Caco-2 (cell line): ENCODE measurements at regions of chr19 and their contacts with region 1.

Region 1: DNA sequence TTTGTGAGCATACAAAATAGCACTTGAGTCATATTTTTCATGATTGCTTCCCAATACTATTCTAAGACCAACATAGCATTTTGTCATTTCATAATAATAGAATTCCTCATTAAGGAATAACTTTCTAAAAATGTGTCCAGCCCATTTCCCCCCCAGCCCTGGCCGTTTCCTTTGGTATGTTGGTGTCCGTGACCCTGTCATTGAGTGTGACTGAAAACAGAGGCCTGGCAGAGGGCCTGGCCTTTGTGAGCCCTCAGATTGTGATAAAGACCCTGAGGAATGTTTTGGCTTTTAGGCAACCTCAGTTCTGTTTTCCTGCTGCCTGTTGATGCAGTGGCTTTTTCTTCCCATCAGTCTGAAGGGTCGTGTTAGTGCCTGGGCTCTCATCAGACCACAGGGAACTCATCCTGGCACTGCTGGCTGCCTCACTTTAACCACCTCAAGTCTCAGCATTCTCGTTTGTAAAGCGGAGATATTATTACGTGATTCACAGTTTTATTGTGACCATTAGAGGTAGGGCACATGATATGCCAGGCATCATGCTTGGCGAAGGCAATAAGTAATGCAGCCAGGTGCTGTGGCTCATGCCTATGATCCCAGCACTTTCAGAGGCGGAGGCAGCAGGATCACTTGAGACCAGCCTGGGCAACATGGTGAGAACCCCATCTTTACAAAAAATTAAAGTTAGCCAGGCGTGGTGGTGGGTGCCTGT is 13.8 kb downstream of the SPINT2 start:
- DNase-seq: no peak
- H3K4me3 ChIP-seq: no peak overlapping the region
- H3K4me3 Mint-ChIP-seq: peak overlapping the region; percentile 35
- H3K27ac Mint-ChIP-seq: peak overlapping the region; percentile 72
- H3K4me1 ChIP-seq: peaks cover 45% of the 10 kb centered on the region
- H3K4me1 Mint-ChIP-seq: peaks cover 29% of the 10 kb centered on the region
- H3K27me3 ChIP-seq: no peaks in the 10 kb centered on the region
- H3K27me3 Mint-ChIP-seq: no peaks in the 10 kb centered on the region
- CTCF ChIP-seq: no peak

Region 2: DNA sequence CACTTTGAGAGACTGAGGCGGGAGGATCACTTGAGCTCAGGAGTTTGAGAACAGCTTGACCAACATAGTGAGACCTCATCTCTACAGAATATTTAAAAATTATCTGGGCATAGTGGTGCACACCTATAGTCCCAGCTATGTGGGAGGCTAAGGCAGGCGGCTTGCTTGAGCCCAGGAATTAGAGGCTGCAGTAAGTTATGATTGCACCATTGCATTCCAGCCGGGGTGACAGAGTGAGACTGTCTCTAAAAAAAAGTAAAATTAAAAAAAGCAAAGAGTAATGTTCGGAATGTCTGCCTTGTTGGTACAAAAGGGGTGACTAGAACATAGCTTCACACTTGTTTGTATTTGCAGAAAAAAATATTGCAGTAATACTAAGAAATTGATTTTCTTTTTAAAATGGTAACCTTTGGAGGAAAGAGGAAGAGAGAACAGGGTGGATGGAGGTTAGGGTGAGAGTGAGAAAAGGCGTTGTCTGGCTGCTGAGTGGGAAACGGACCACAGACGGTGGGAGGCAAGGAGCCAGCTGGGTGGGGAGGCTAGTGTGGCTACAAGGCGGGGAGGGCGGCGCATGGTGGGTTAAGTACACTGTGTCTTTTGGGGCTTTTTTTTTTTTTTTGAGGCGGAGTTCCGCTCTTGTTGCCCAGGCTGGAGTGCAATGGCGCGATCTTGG is 32.2 kb before region 1 on chr19:
- CTCF ChIA-PET with region 1: no interaction called
- POLR2A ChIA-PET with region 1: no interaction called
- intact Hi-C with region 1: loop called (anchors 5 kb)
- DNase-seq: no peak
- H3K4me3 ChIP-seq: no peak overlapping the region
- H3K4me3 Mint-ChIP-seq: no peak overlapping the region
- H3K27ac Mint-ChIP-seq: peak overlapping the region; percentile 45
- H3K4me1 ChIP-seq: peaks cover 17% of the 10 kb centered on the region
- H3K4me1 Mint-ChIP-seq: peaks cover 28% of the 10 kb centered on the region
- H3K27me3 ChIP-seq: no peaks in the 10 kb centered on the region
- H3K27me3 Mint-ChIP-seq: no peaks in the 10 kb centered on the region
- CTCF ChIP-seq: no peak

Region 3: GRCh38 chr19:38315657-38316476 is 37.7 kb after region 1 on chr19 and contains the start of gene YIF1B:
- CTCF ChIA-PET with region 1: interaction called, 4 read pairs
- POLR2A ChIA-PET with region 1: no interaction called
- intact Hi-C with region 1: loop called (anchors 1 kb)
- DNase-seq: peak; percentile 98 to 99
- H3K4me3 ChIP-seq: peak within 1 kb of the TSS; percentile 61
- H3K4me3 Mint-ChIP-seq: peak within 1 kb of the TSS; percentile 96
- H3K27ac Mint-ChIP-seq: peak within 1 kb of the TSS; percentile 91
- H3K4me1 ChIP-seq: peaks cover 4% of the 10 kb centered on the region; the same call in 1 of the 2 replicates
- H3K4me1 Mint-ChIP-seq: peaks cover 11% of the 10 kb centered on the region
- H3K27me3 ChIP-seq: no peaks in the 10 kb centered on the region
- H3K27me3 Mint-ChIP-seq: no peaks in the 10 kb centered on the region
- CTCF ChIP-seq: no peak
- total RNA-seq, gene YIF1B: 61.7 and 66.7 TPM in 2 replicates